Natural killer cell (primary cell): ENCODE measurements at regions of chr20 and their contacts with region 1.

Region 1: DNA sequence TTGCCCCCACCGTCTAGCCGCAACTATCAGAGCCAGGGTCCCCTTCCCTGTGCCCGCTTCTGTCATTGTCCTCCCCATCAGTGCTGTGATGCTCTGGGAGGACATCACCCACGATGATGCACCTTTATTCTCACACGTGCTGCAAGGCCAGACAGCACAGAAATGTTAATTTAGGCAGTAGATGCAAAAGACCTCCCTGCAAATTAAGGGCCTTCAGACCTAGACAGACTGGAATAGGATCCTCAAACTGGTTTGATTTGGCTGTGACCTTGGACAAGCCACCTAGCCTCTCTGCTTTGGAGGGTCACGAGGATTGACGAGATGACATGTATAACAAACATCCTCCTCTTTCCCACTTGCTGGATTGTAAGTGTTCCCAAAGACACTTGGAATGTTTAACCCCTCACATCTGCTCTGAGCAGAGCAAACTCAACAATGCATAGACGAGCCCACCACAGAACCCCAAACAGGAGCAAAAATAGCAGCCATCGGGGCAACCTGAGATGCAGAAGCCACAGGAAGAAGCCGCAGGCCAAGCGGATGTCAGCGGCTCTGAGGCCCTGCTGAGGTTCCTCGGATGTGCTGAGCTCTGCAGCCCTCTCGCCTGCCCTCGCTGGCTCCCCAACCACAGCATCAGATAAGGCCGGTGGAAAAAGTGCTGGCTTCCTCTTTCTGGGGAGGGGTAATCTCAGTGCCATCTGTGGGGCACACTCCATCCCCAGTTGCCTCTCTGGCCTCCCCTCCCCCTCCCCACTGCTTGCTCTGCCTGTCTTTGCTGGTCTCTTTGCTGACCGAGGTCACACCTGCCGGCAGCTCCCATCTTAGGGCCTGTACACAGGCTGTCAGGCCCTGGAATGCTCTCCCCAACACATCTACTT is 35.3 kb downstream of the TOX2 start:
- DNase-seq: peak; percentile 72 to 86
- ATAC-seq: peak; percentile 79 to 97 (median 91)
- H3K4me3 ChIP-seq: no peak overlapping the region
- H3K4me3 Mint-ChIP-seq: peak overlapping the region; percentile 63
- H3K27ac ChIP-seq: no peak overlapping the region
- H3K27ac Mint-ChIP-seq: peak overlapping the region; percentile 17 to 50
- H3K4me1 ChIP-seq: peaks cover 67% of the 10 kb centered on the region
- H3K4me1 Mint-ChIP-seq: peaks cover 61 to 88% of the 10 kb centered on the region in 2 donors
- H3K27me3 ChIP-seq: peaks cover 55% of the 10 kb centered on the region
- H3K27me3 Mint-ChIP-seq: peaks cover 66 to 77% of the 10 kb centered on the region in 2 donors
- CTCF ChIP-seq: no peak

Region 2: GRCh38 chr20:43839793-43840199 is 110.2 kb before region 1 on chr20:
- intact Hi-C with region 1: loop called (anchors 5 kb)
- DNase-seq: no peak
- ATAC-seq: no peak
- H3K4me3 ChIP-seq: no peak overlapping the region
- H3K4me3 Mint-ChIP-seq: no peak overlapping the region
- H3K27ac ChIP-seq: no peak overlapping the region
- H3K27ac Mint-ChIP-seq: no peak overlapping the region
- H3K4me1 ChIP-seq: peaks cover 18% of the 10 kb centered on the region
- H3K4me1 Mint-ChIP-seq: peaks cover 6 to 23% of the 10 kb centered on the region in 2 donors
- H3K27me3 ChIP-seq: peaks cover 10% of the 10 kb centered on the region
- H3K27me3 Mint-ChIP-seq: peaks cover 44 to 50% of the 10 kb centered on the region in 2 donors
- CTCF ChIP-seq: no peak

Region 3: DNA sequence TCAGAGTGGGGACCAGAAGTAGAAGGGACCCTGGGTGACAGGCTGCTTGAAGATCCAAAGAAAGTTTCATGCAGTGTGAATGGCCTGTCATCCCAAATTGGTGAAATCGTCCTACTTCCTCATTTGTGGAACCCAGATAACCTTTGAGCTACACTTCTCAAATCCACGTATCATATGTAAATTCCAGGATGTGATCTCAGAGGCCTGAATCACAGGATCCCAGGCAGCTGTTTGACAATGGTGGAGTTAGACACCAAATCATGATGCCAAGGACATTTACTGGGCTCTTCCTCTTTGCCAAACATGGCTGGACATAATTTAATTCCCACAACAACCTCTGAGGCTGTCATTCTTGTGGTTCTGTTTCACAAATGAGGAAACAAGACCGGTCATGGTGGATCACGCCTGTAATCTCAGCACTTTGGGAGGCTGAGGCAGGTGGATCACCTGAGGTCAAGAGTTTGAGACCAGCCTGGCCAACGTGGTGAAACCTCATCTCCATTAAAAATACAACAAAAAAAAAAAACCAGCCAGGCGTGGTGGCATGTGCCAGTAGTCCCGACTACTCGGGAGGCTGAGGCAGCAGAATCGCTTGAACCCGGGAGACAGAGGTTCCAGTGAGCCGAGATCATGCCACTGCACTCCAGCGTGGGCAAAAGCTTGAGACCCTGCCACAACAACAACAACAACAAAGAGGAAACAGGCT is 485.8 kb after region 1 on chr20:
- intact Hi-C with region 1: no loop called
- DNase-seq: no peak
- ATAC-seq: no peak
- H3K4me3 ChIP-seq: no peak overlapping the region
- H3K4me3 Mint-ChIP-seq: no peak overlapping the region
- H3K27ac ChIP-seq: no peak overlapping the region
- H3K27ac Mint-ChIP-seq: no peak overlapping the region
- H3K4me1 ChIP-seq: no peaks in the 10 kb centered on the region
- H3K4me1 Mint-ChIP-seq: peaks cover 0 to 4% of the 10 kb centered on the region in 2 donors
- H3K27me3 ChIP-seq: no peaks in the 10 kb centered on the region
- H3K27me3 Mint-ChIP-seq: peaks cover 0 to 7% of the 10 kb centered on the region in 2 donors
- CTCF ChIP-seq: no peak